Naive thymus-derived CD4-positive, alpha-beta T cell (primary cell): ENCODE measurements at regions of chr7 and their contacts with region 1.

Region 1: GRCh38 chr7:77293046-77293445 is 93.4 kb upstream of the FGL2 start:
- DNase-seq: no peak
- ATAC-seq: no peak
- H3K4me3 ChIP-seq: no peak overlapping the region
- H3K4me3 Mint-ChIP-seq: no peak overlapping the region
- H3K27ac ChIP-seq: no peak overlapping the region
- H3K27ac Mint-ChIP-seq: no peak overlapping the region
- H3K4me1 ChIP-seq: no peaks in the 10 kb centered on the region
- H3K4me1 Mint-ChIP-seq: peaks cover 0 to 4% (median 0%) of the 10 kb centered on the region in 7 donors
- H3K27me3 ChIP-seq: no peaks in the 10 kb centered on the region
- H3K27me3 Mint-ChIP-seq: no peaks in the 10 kb centered on the region

Region 2: GRCh38 chr7:77651573-77652162 is 358.6 kb after region 1 on chr7:
- CTCF ChIA-PET with region 1: no interaction called
- POLR2A ChIA-PET with region 1: no interaction called
- intact Hi-C with region 1: loop called in 1 of 2 experiments (anchors 1 kb)
- DNase-seq: peak in 7 of 9 donors; percentile 9 to 56 (median 38)
- ATAC-seq: peak; percentile 52
- H3K4me3 ChIP-seq: no peak overlapping the region
- H3K4me3 Mint-ChIP-seq: no peak overlapping the region
- H3K27ac ChIP-seq: no peak overlapping the region
- H3K27ac Mint-ChIP-seq: no peak overlapping the region
- H3K4me1 ChIP-seq: no peaks in the 10 kb centered on the region
- H3K4me1 Mint-ChIP-seq: peaks cover 0 to 2% (median 0%) of the 10 kb centered on the region in 7 donors
- H3K27me3 ChIP-seq: no peaks in the 10 kb centered on the region
- H3K27me3 Mint-ChIP-seq: no peaks in the 10 kb centered on the region